HCT116 (cell line): ENCODE measurements at regions of chr19 and their contacts with region 1.

Region 1: DNA sequence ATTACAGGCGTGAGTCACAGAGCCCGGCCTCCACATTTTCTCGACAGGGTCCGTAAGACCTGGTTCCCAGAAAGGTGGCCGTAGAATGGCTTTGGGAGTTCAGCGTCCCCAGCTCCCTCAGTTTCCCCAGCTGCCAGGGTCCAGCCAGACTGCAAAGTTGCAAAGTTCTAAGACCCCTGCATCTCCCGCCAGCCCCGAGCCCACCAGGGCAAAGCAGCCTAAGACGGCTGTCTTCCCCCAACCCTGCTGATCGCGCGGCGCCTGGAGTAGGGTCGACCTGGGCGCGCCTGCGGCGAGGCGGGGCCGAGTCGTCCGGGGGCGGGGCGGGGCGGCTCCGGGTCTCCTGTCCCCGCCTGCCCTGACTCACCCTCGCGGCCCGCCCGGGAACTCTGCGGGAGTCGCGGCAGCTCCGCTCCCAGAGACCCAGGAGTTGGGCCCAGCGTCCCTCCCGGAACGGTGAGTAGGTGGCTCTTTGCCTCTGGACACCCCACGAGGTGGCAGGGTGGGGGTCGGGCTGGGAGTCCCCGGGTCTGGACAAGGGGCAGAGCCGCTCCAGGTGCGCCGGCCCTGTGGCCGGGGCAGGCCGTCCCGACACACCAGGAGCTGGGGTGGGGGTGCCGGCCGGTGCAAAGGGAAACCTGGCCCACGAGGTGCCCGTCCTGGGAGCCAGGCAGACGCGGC is at the start of gene LRRC8E:
- DNase-seq: no peak
- ATAC-seq: peak; percentile 98
- H3K4me3 ChIP-seq: peak within 1 kb of the TSS; percentile 81 to 94
- H3K27ac ChIP-seq: peak within 1 kb of the TSS; percentile 76
- H3K4me1 ChIP-seq: peaks cover 13 to 42% of the 10 kb centered on the region in 2 experiments; a peak in 3 of 4 replicates
- H3K27me3 ChIP-seq: no peaks in the 10 kb centered on the region
- CTCF ChIP-seq: no peak
- POLR2A ChIP-seq: no peak
- RAD21 ChIP-seq: no peak
- total RNA-seq, gene LRRC8E: 18.1 TPM

Region 2: GRCh38 chr19:7903244-7904073 is 15.2 kb after region 1 on chr19 and contains the start of gene MAP2K7:
- CTCF ChIA-PET with region 1: interaction called, 6 read pairs
- POLR2A ChIA-PET with region 1: interaction called, 9 read pairs
- RAD21 ChIA-PET with region 1: no interaction called
- intact Hi-C with region 1: loop called (anchors 2 kb)
- DNase-seq: peak; percentile 98
- ATAC-seq: peak; percentile 85
- H3K4me3 ChIP-seq: peak within 1 kb of the TSS; percentile 75 to 97
- H3K27ac ChIP-seq: peak within 1 kb of the TSS; percentile 92
- H3K4me1 ChIP-seq: peaks cover 3 to 30% of the 10 kb centered on the region in 2 experiments; a peak in 2 of 4 replicates
- H3K27me3 ChIP-seq: no peaks in the 10 kb centered on the region
- CTCF ChIP-seq: peak; percentile 25 to 95 (median 55); a peak in 5 of 6 replicates
- POLR2A ChIP-seq: peak; percentile 97
- RAD21 ChIP-seq: no peak; the same call in none of the 2 replicates
- total RNA-seq, gene MAP2K7: 59.1 TPM

Region 3: DNA sequence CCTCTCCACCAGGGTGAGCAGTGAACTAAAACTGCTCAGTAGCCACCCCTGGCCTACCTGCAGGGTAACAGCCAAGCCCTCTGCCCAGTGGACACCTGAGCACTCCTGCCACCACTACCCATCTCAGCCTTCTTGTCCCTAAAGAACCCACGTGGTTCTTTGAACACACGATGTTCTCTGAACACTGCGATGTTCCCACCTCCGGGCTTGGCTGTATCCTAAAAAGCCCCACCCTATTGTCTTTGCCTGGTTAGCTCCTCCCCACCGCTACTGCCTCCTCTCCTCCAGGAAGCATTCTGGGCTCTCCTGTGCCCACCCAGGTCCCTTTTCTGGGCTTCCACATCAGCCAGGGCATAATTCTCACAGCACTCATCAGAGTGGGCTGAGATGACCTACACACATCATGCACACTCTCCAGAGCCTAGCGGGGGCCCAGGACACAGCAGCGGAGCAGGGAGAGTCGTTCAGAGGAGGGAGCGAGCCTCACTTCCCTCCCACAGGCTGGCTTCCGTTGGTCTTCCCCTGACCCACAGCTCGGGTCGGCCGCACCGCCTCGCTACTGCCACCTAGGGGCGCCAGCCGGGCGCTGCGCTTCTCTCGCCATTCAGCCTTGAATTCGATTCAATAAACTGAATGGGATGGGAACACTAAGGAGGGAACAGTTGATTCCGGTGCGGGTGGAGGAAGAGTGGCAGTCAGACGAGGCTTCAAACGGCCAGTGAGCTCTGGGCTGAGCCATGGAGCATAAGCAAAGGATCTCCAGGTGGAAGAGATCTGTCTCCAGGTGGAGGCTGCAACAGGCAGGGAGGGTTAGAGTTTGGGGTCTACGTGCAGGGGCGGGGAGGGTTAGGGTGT is 113.9 kb after region 1 on chr19:
- CTCF ChIA-PET with region 1: no interaction called
- POLR2A ChIA-PET with region 1: no interaction called
- RAD21 ChIA-PET with region 1: no interaction called
- intact Hi-C with region 1: no loop called
- DNase-seq: peak; percentile 55
- ATAC-seq: peak; percentile 67
- H3K4me3 ChIP-seq: peak overlapping the region; percentile 33 to 49
- H3K27ac ChIP-seq: peak overlapping the region; percentile 64
- H3K4me1 ChIP-seq: peaks cover 21 to 40% of the 10 kb centered on the region in 2 experiments
- H3K27me3 ChIP-seq: no peaks in the 10 kb centered on the region
- CTCF ChIP-seq: peak; percentile 69 to 99 (median 96)
- POLR2A ChIP-seq: no peak
- RAD21 ChIP-seq: peak; percentile 60